B cell (primary cell): ENCODE measurements at regions of chr7 and their contacts with region 1.

Region 1: DNA sequence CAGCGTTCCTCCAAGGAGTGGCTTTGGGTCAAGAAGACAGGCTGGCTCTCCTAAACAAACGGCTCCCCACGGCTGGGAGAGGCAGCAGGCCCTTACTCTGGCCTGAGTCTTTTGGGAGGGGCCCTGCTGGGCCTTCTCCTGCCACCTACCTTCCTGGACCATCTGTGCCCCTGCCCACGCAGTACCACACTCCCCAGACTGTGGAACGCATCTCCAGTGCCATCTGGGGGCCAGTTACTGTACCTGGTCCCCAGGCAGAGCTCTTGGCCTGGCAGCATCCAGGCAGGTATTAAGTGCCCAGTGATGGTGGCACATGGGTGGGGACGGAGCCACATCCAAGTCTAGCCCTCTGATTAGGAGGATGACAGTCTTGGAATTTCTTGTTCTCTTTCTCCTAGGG is 14.4 kb downstream of the ALKBH4 start:
- DNase-seq: peak; percentile 75
- ATAC-seq: peak; percentile 77
- H3K4me3 ChIP-seq: no peak overlapping the region
- H3K4me3 Mint-ChIP-seq: no peak overlapping the region
- H3K27ac ChIP-seq: peak overlapping the region in 1 of 2 donors; percentile 45
- H3K27ac Mint-ChIP-seq: peak overlapping the region; percentile 91
- H3K4me1 ChIP-seq: peaks cover 17 to 25% of the 10 kb centered on the region in 2 donors
- H3K4me1 Mint-ChIP-seq: peaks cover 28% of the 10 kb centered on the region
- H3K27me3 ChIP-seq: no peaks in the 10 kb centered on the region
- H3K27me3 Mint-ChIP-seq: no peaks in the 10 kb centered on the region
- CTCF ChIP-seq: peak; percentile 80

Region 2: DNA sequence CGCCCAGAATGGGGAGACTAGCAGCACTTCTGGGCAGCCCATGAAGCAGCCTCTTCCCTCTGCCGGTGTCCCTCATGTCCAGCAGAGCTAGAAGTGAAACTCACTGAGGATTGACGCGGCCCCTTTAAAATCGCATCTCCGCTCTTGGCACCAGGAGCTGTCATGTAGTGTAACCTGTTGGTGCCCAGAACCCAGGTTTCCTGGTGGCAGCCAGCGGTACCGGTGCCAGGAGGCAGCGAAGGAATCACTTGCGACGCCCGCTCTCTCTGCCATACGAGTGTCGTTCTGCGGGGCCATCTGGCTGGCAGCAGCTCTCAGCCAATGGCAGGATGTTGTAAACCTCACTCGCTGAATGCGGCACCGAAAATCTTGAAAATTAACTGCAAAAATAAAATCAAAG is 550.1 kb before region 1 on chr7:
- CTCF ChIA-PET with region 1: no interaction called
- POLR2A ChIA-PET with region 1: no interaction called
- intact Hi-C with region 1: no loop called
- DNase-seq: no peak
- ATAC-seq: no peak
- H3K4me3 ChIP-seq: no peak overlapping the region
- H3K4me3 Mint-ChIP-seq: no peak overlapping the region
- H3K27ac ChIP-seq: no peak overlapping the region
- H3K27ac Mint-ChIP-seq: no peak overlapping the region
- H3K4me1 ChIP-seq: peaks cover 5 to 6% of the 10 kb centered on the region in 2 donors
- H3K4me1 Mint-ChIP-seq: peaks cover 21% of the 10 kb centered on the region
- H3K27me3 ChIP-seq: no peaks in the 10 kb centered on the region
- H3K27me3 Mint-ChIP-seq: no peaks in the 10 kb centered on the region
- CTCF ChIP-seq: no peak

Region 3: GRCh38 chr7:102044984-102045673 is 405.1 kb before region 1 on chr7:
- CTCF ChIA-PET with region 1: no interaction called
- POLR2A ChIA-PET with region 1: no interaction called
- intact Hi-C with region 1: no loop called
- DNase-seq: no peak
- ATAC-seq: no peak
- H3K4me3 ChIP-seq: no peak overlapping the region
- H3K4me3 Mint-ChIP-seq: peak overlapping the region; percentile 62
- H3K27ac ChIP-seq: no peak overlapping the region
- H3K27ac Mint-ChIP-seq: no peak overlapping the region
- H3K4me1 ChIP-seq: peaks cover 8 to 13% of the 10 kb centered on the region in 2 donors
- H3K4me1 Mint-ChIP-seq: peaks cover 36% of the 10 kb centered on the region
- H3K27me3 ChIP-seq: peaks cover 0 to 3% (median 0%) of the 10 kb centered on the region in 4 experiments
- H3K27me3 Mint-ChIP-seq: peaks cover 3% of the 10 kb centered on the region
- CTCF ChIP-seq: no peak

Region 4: GRCh38 chr7:102260856-102261255 is 189.4 kb before region 1 on chr7:
- CTCF ChIA-PET with region 1: no interaction called
- POLR2A ChIA-PET with region 1: no interaction called
- intact Hi-C with region 1: no loop called
- DNase-seq: no peak
- ATAC-seq: no peak
- H3K4me3 ChIP-seq: no peak overlapping the region
- H3K4me3 Mint-ChIP-seq: no peak overlapping the region
- H3K27ac ChIP-seq: no peak overlapping the region
- H3K27ac Mint-ChIP-seq: no peak overlapping the region
- H3K4me1 ChIP-seq: no peaks in the 10 kb centered on the region
- H3K4me1 Mint-ChIP-seq: no peaks in the 10 kb centered on the region
- H3K27me3 ChIP-seq: no peaks in the 10 kb centered on the region
- H3K27me3 Mint-ChIP-seq: no peaks in the 10 kb centered on the region
- CTCF ChIP-seq: no peak

Region 5: DNA sequence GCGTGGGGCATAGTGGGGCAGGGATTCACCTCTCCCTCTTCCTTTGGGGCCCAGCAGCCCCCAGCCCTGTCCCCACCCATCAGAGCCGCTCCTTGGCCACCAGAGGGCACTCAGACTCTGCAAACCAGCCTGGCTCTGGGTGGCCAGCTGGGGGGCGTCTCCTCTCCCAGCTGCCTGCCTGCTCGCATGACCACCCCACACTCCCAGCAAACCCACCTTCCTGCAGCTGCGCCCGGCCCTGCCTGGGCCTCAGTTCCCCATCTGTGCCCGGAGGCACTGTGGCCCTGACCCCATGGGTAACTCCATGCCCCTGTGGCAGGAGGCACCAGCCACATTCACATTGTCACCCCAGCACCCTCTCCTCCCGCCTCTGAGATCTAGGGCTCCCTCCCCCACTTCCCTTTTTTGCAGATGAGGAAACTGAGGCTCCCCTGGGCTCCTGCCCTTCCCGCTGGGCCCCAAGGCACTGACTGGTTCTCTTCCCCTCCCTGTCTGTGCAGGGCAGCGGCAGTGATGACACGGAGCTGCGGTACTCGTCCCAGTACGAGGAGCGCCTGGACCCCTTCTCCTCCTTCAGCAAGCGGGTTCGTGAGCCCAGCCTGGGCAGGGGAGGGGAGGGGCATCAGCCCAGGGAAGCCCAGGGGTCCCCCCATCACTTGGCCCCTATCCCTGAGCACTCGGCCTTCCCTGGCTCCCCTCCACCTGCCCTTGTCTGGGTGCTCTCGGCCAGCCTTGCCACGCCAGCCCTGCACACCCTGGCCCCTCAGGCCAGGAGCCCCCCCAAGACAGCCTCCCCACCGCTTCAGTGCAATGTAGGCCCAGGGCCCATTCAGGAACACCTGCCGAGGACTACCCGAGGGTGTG is 170.5 kb before region 1 on chr7:
- CTCF ChIA-PET with region 1: interaction called, 16 read pairs
- POLR2A ChIA-PET with region 1: no interaction called
- intact Hi-C with region 1: no loop called
- DNase-seq: peak; percentile 84
- ATAC-seq: peak; percentile 90
- H3K4me3 ChIP-seq: peak overlapping the region in 3 of 5 experiments; percentile 13 to 44 (median 15)
- H3K4me3 Mint-ChIP-seq: peak overlapping the region; percentile 83
- H3K27ac ChIP-seq: no peak overlapping the region
- H3K27ac Mint-ChIP-seq: peak overlapping the region; percentile 84
- H3K4me1 ChIP-seq: peaks cover 17 to 24% of the 10 kb centered on the region in 2 donors
- H3K4me1 Mint-ChIP-seq: peaks cover 28% of the 10 kb centered on the region
- H3K27me3 ChIP-seq: no peaks in the 10 kb centered on the region
- H3K27me3 Mint-ChIP-seq: no peaks in the 10 kb centered on the region
- CTCF ChIP-seq: peak; percentile 87

Region 6: DNA sequence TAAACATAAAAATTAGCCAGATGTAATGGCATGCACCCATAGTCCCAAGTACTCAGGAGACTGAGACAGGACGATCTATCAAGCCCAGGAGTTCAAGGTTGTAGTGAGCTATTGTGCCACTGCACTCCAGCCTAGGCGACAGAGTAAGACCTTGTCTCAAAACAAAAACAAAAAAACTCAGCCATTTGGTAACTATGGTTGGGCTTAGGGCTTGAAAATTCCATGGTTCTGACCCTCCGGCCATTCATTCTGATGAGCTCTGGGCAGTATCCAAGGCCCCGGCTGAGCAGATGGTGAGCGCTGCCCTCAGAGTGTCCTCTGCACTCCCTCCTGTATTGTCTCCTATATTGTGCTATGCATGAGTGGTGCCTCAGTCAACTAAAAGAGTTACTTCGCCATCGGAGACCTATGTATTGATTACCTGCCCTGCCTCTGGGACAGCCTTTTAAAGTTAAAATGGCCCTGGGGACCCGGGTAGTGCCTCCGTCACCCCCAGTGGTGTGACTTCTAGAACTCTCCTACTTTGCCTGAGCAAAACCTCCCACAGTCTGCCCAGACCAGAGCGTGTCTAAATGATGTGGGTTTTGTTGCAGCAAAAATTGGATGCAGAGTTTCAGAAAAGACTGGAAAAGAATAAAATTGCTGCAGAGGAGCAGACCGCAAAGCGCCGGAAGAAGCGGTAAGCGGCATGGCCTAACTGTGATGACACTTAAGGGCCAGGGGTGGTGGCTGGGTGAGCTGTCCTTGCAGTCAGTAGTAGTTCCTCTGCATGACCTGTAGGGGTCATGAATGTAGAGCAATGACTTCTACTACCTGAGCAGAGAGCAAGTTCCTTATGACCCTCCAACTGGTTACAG is 46.0 kb before region 1 on chr7:
- CTCF ChIA-PET with region 1: interaction called, 1,182 read pairs
- POLR2A ChIA-PET with region 1: interaction called, 15 read pairs
- intact Hi-C with region 1: loop called (anchors 1 kb)
- DNase-seq: peak; percentile 81
- ATAC-seq: peak; percentile 86
- H3K4me3 ChIP-seq: no peak overlapping the region
- H3K4me3 Mint-ChIP-seq: no peak overlapping the region
- H3K27ac ChIP-seq: no peak overlapping the region
- H3K27ac Mint-ChIP-seq: no peak overlapping the region
- H3K4me1 ChIP-seq: peaks cover 20 to 28% of the 10 kb centered on the region in 2 donors
- H3K4me1 Mint-ChIP-seq: peaks cover 36% of the 10 kb centered on the region
- H3K27me3 ChIP-seq: no peaks in the 10 kb centered on the region
- H3K27me3 Mint-ChIP-seq: no peaks in the 10 kb centered on the region
- CTCF ChIP-seq: peak; percentile 87

Region 7: GRCh38 chr7:102412548-102412947 is 37.7 kb before region 1 on chr7:
- CTCF ChIA-PET with region 1: interaction called, 1,182 read pairs
- POLR2A ChIA-PET with region 1: interaction called, 13 read pairs
- intact Hi-C with region 1: loop called (anchors 1 kb)
- DNase-seq: peak; percentile 67
- ATAC-seq: no peak
- H3K4me3 ChIP-seq: no peak overlapping the region
- H3K4me3 Mint-ChIP-seq: no peak overlapping the region
- H3K27ac ChIP-seq: no peak overlapping the region
- H3K27ac Mint-ChIP-seq: peak overlapping the region; percentile 34
- H3K4me1 ChIP-seq: peaks cover 58 to 76% of the 10 kb centered on the region in 2 donors
- H3K4me1 Mint-ChIP-seq: peaks cover 77% of the 10 kb centered on the region
- H3K27me3 ChIP-seq: no peaks in the 10 kb centered on the region
- H3K27me3 Mint-ChIP-seq: no peaks in the 10 kb centered on the region
- CTCF ChIP-seq: peak; percentile 68

Region 8: DNA sequence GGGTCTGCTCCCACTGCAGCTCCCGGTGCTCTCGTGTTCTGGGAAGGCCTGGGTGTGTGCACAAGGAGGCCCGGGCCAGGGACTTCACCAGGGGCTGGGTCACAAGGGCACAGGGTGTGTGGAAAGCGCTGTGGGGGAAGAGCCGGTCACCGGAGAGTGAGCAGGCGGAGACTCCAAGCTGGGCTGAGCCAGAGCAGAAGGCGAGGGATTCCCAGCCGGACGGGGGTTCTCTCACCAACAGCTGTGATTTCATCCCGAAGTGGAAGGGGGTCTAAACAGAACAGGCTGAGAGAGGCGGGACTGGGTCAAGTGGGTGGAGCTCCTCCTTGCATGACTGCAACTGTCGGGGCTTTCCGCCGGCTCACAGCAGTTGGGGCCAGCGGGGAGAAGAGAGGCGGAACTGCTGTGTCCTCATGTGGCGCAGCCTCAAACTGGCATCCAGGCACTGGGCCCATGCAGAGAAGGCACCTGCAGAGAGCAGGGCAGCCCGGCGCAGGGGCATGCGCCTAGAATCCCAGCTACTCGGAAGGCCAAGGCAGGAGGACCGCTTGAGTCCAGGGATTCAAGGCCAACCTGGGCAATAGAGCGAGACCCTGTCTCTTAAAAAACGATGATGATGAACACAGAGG is 24.5 kb before region 1 on chr7:
- CTCF ChIA-PET with region 1: interaction called, 1,182 read pairs
- POLR2A ChIA-PET with region 1: interaction called, 34 read pairs
- intact Hi-C with region 1: no loop called
- DNase-seq: peak; percentile 95
- ATAC-seq: peak; percentile 76
- H3K4me3 ChIP-seq: peak overlapping the region; percentile 30 to 48 (median 39)
- H3K4me3 Mint-ChIP-seq: peak overlapping the region; percentile 87
- H3K27ac ChIP-seq: peak overlapping the region; percentile 100
- H3K27ac Mint-ChIP-seq: peak overlapping the region; percentile 100
- H3K4me1 ChIP-seq: peaks cover 94 to 99% of the 10 kb centered on the region in 2 donors
- H3K4me1 Mint-ChIP-seq: peaks cover 79% of the 10 kb centered on the region
- H3K27me3 ChIP-seq: no peaks in the 10 kb centered on the region
- H3K27me3 Mint-ChIP-seq: no peaks in the 10 kb centered on the region
- CTCF ChIP-seq: no peak

Region 9: DNA sequence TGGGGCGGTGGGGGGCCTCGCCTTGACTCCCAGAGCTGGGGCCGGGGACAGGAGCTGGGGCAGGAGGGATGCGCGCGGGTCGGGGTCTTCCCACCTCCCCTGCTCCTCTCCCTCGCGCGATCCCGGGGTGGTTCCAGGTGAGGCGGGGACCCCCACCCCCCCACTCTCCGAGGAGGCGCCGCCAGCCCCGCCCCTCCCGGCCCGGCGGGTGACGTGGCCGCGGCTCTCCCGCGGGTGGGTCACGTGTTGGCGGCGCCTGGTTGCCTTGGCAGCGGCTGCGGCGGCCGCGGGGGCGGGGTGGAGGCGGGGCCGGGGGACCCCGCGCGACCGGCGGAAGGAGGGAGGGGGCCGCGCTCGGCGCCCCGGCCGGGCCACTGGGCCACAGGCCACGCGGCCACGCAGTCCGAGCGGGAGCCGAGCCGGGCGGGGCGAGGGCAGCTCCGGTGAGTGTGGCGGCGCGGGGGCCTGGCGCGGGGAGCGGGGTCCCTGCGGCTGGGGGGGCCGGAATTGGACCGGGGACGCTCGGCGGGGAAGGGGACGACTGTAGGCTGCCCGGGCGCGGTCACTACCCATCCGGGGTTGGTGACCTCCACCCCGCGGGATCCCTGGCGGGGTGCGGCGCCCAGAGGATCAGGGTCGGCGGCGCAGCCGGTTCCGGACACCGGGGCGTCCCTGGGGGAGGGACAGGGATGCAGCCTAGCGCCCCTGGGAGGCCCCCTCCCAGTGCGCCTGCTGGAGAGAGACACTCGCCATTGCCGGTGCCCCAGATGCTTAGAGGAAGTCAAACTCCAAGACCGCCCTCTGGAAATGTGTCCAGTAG is 16.8 kb before region 1 on chr7 and contains the start of gene ORAI2:
- CTCF ChIA-PET with region 1: interaction called, 10 read pairs
- POLR2A ChIA-PET with region 1: interaction called, 76 read pairs
- intact Hi-C with region 1: loop called (anchors 1 kb)
- DNase-seq: peak; percentile 91
- ATAC-seq: peak; percentile 62
- H3K4me3 ChIP-seq: peak within 1 kb of the TSS; percentile 87 to 97 (median 94)
- H3K4me3 Mint-ChIP-seq: peak within 1 kb of the TSS; percentile 99
- H3K27ac ChIP-seq: peak within 1 kb of the TSS; percentile 98 to 100
- H3K27ac Mint-ChIP-seq: peak within 1 kb of the TSS; percentile 98
- H3K4me1 ChIP-seq: peaks cover 67 to 75% of the 10 kb centered on the region in 2 donors
- H3K4me1 Mint-ChIP-seq: peaks cover 67% of the 10 kb centered on the region
- H3K27me3 ChIP-seq: no peaks in the 10 kb centered on the region
- H3K27me3 Mint-ChIP-seq: no peaks in the 10 kb centered on the region
- CTCF ChIP-seq: no peak
- total RNA-seq, gene ORAI2: 450 and 461 TPM in 2 replicates

Region 10: GRCh38 chr7:102440078-102440795 is 10.0 kb before region 1 on chr7:
- CTCF ChIA-PET with region 1: interaction called, 17 read pairs
- POLR2A ChIA-PET with region 1: interaction called, 76 read pairs
- intact Hi-C with region 1: no loop called
- DNase-seq: no peak
- ATAC-seq: no peak
- H3K4me3 ChIP-seq: no peak overlapping the region
- H3K4me3 Mint-ChIP-seq: no peak overlapping the region
- H3K27ac ChIP-seq: peak overlapping the region; percentile 90
- H3K27ac Mint-ChIP-seq: no peak overlapping the region
- H3K4me1 ChIP-seq: peaks cover 52 to 76% of the 10 kb centered on the region in 2 donors
- H3K4me1 Mint-ChIP-seq: peaks cover 54% of the 10 kb centered on the region
- H3K27me3 ChIP-seq: no peaks in the 10 kb centered on the region
- H3K27me3 Mint-ChIP-seq: no peaks in the 10 kb centered on the region
- CTCF ChIP-seq: no peak